ENCODE measurements at regions of chr7 and their contacts with region 1.

Region 1: GRCh38 chr7:130662426-130662825 is 6.1 kb downstream of the COPG2 start:
- DNase-seq: no peak
- H3K4me3 ChIP-seq: no peak overlapping the region
- H3K27ac ChIP-seq: no peak overlapping the region
- H3K4me1 ChIP-seq: peaks cover 0 to 2% (median under 1%) of the 10 kb centered on the region in 4 donors
- H3K27me3 ChIP-seq: no peaks in the 10 kb centered on the region
- CTCF ChIP-seq: no peak
- EP300 ChIP-seq: no peak
- POLR2A ChIP-seq: no peak

Region 2: DNA sequence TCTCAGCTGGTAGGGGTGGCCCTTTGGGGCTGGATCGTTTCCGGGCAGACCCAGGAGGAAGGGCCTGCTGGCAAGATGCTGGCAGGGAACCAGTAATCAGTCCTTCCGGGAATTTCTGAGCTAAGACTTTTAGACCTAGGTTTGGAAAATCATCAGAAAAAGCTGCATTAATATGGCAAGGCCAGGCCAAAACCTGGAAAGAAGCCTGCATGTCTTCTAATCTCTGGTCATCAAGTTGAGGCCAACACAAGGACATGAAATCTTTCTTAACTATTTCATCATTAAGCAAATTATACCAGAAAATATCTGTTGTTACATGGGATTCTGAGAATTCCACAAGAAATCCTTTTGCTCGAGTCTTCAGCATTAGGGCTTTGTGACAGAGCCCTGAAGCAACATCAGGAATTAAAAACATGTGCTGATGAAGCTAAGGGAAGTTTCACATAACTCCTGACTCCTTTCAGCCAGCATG is 262.3 kb before region 1 on chr7:
- in situ Hi-C with region 1: no loop called
- intact Hi-C with region 1: loop called (anchors 5 kb)
- DNase-seq: no peak
- H3K4me3 ChIP-seq: no peak overlapping the region
- H3K27ac ChIP-seq: no peak overlapping the region
- H3K4me1 ChIP-seq: peaks cover 0 to 8% (median 0%) of the 10 kb centered on the region in 4 donors
- H3K27me3 ChIP-seq: no peaks in the 10 kb centered on the region
- CTCF ChIP-seq: no peak
- EP300 ChIP-seq: no peak
- POLR2A ChIP-seq: no peak

Region 3: GRCh38 chr7:130814778-130815335 is 152.4 kb after region 1 on chr7:
- in situ Hi-C with region 1: no loop called
- intact Hi-C with region 1: no loop called
- DNase-seq: no peak
- H3K4me3 ChIP-seq: no peak overlapping the region
- H3K27ac ChIP-seq: no peak overlapping the region
- H3K4me1 ChIP-seq: no peaks in the 10 kb centered on the region
- H3K27me3 ChIP-seq: no peaks in the 10 kb centered on the region
- CTCF ChIP-seq: peak in 4 of 5 experiments; percentile 9 to 27 (median 23)
- EP300 ChIP-seq: no peak
- POLR2A ChIP-seq: no peak